Aorta (tissue), 5 donors: ENCODE measurements at regions of chr7 and their contacts with region 1.

Region 1: DNA sequence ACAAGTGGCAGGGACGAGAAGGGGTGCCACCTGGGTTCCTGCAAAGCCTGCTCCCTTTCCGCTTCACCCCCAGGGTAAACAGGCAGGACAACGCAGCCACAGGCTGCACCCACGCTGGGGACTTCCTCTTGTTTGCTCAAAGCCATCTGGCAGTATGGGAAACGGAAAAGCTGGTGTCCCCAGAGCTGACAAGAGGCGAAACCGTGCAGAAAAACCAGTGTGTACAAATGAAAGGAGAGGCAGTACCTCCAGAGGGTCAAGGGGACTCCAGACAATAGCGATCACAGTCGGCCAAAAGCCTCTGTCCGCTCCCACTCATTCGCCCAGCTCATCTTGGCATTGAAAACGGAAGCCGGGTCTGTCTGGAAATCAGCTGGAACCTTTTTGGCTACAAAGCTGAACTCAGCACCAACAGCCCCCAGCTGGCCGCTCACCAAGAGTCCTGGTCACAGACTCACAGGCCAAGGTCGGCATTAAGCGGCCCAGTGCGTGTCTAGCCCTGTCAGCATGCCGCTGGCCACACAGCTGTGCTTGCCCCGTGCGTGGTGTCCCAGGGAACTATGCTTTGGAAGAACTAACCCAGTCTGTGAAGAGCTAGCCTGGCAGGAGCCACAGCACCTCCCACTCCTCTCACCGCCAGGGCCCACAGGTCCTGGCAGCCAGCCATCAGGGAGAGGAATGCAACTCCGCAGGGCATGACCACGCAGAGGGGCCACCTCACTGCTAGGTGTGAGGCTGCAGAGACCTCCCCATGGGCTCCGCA is 10.4 kb downstream of the TNS3 start:
- DNase-seq: peak; percentile 91 to 94
- ATAC-seq: peak; percentile 72
- H3K4me3 ChIP-seq: no peak overlapping the region
- H3K27ac ChIP-seq: peak overlapping the region; percentile 62 to 99
- H3K4me1 ChIP-seq: peaks cover 0 to 6% of the 10 kb centered on the region in 2 donors
- H3K27me3 ChIP-seq: no peaks in the 10 kb centered on the region

Region 2: DNA sequence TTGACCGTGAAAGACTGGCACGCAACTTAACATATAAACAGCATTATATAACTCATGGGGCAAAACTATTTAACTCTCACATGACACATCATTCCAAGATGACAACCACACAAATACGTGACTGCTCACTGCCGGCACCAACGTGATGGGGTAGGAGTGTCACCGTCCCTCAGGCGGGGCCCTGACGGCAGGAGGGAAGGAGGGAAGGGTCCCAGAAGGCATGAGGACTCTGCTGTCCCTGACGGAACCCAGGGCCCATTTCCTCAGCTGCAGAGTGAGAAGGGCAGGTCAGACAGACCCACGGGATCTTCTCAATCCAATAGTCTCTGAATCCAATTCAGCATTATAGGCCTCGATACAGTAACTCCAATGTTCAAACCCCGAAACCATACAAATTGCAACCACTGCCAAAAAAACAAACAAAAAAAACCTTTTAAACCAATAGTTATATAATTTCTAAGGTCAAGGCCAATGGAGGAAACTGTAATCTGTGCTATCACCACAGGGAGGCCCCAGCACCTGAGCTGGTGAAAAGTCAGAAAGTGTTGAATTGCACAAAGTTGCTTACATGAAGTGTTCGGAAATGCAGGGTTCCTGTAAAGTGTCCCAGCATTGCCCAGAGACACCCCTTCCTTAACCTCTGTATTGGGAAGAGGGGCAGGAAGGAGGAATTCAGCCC is 127.0 kb before region 1 on chr7:
- intact Hi-C with region 1: loop called in 1 of 2 experiments (anchors 10 kb)
- DNase-seq: peak in 1 of 2 donors; percentile 55
- ATAC-seq: no peak
- H3K4me3 ChIP-seq: no peak overlapping the region
- H3K27ac ChIP-seq: no peak overlapping the region
- H3K4me1 ChIP-seq: peaks cover 0 to 2% of the 10 kb centered on the region in 2 donors
- H3K27me3 ChIP-seq: no peaks in the 10 kb centered on the region